Naive thymus-derived CD4-positive, alpha-beta T cell (primary cell): ENCODE measurements at regions of chr18 and their contacts with region 1.

Region 1: GRCh38 chr18:75478996-75479880 is 51.7 kb upstream of the SMIM21 start:
- DNase-seq: peak in 6 of 9 donors; percentile 15 to 56 (median 49)
- ATAC-seq: peak; percentile 69
- H3K4me3 ChIP-seq: no peak overlapping the region
- H3K4me3 Mint-ChIP-seq: no peak overlapping the region
- H3K27ac ChIP-seq: no peak overlapping the region
- H3K27ac Mint-ChIP-seq: no peak overlapping the region
- H3K4me1 ChIP-seq: no peaks in the 10 kb centered on the region
- H3K4me1 Mint-ChIP-seq: peaks cover 0 to 10% (median 6%) of the 10 kb centered on the region in 7 donors
- H3K27me3 ChIP-seq: peaks cover 0 to 3% of the 10 kb centered on the region in 2 donors
- H3K27me3 Mint-ChIP-seq: peaks cover 9 to 19% (median 13%) of the 10 kb centered on the region in 5 donors

Region 2: DNA sequence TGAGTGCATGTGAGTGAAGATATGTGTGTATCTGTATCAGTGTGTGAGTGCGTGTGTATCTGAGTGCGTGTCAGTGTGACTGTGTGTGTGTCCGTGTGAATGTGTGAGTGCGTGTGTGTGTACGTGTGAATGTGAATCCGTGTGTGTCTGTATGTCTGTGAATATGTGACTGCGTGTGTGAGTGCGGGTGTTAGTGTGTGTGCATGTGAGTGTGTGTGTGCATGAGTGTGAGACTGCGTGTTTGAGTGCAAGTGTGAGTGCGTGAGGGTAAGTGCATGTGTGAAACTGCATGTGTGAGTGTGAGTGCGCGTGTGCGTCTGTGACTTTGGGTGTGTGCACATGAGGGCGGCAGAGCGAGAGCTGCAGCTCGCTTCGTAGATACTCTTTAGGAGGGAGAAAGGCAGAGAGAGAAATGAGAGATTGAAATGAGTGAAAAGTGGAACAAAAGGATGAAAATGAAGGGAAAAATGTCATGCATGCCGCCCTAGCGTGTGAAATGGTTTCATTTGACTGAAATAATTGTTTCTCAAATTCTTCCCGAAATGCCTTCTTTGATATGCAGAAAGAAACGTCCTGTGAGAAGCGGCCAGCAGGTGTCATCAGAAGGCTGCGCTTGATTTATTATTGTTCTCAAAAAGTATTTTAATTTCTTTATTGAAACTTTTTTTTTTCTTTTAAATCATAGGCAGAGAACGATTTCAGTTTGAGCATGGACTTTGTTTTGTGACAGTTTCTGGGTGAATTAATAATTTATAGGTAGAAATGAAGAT is 856.0 kb before region 1 on chr18:
- CTCF ChIA-PET with region 1: interaction called, 3 read pairs
- POLR2A ChIA-PET with region 1: no interaction called
- intact Hi-C with region 1: loop called (anchors 1 to 2 kb)
- DNase-seq: peak in 7 of 9 donors; percentile 16 to 62 (median 48)
- ATAC-seq: peak; percentile 52
- H3K4me3 ChIP-seq: no peak overlapping the region
- H3K4me3 Mint-ChIP-seq: no peak overlapping the region
- H3K27ac ChIP-seq: no peak overlapping the region
- H3K27ac Mint-ChIP-seq: no peak overlapping the region
- H3K4me1 ChIP-seq: peaks cover 3 to 9% of the 10 kb centered on the region in 2 donors
- H3K4me1 Mint-ChIP-seq: peaks cover 6 to 28% (median 13%) of the 10 kb centered on the region in 7 donors
- H3K27me3 ChIP-seq: no peaks in the 10 kb centered on the region
- H3K27me3 Mint-ChIP-seq: no peaks in the 10 kb centered on the region

Region 3: GRCh38 chr18:75161256-75162028 is 317.8 kb before region 1 on chr18:
- CTCF ChIA-PET with region 1: no interaction called
- POLR2A ChIA-PET with region 1: no interaction called
- intact Hi-C with region 1: loop called in 1 of 2 experiments (anchors 1 kb)
- DNase-seq: peak in 7 of 9 donors; percentile 26 to 51 (median 37)
- ATAC-seq: peak; percentile 77
- H3K4me3 ChIP-seq: peak overlapping the region; percentile 77
- H3K4me3 Mint-ChIP-seq: peak overlapping the region; percentile 80 to 95 (median 91)
- H3K27ac ChIP-seq: peak overlapping the region; percentile 69
- H3K27ac Mint-ChIP-seq: peak overlapping the region in 8 of 9 donors; percentile 79 to 93 (median 88)
- H3K4me1 ChIP-seq: no peaks in the 10 kb centered on the region
- H3K4me1 Mint-ChIP-seq: peaks cover 7 to 28% (median 12%) of the 10 kb centered on the region in 7 donors
- H3K27me3 ChIP-seq: no peaks in the 10 kb centered on the region
- H3K27me3 Mint-ChIP-seq: peaks cover 0 to 4% (median 0%) of the 10 kb centered on the region in 5 donors

Region 4: GRCh38 chr18:75173125-75173432 is 306.2 kb before region 1 on chr18:
- CTCF ChIA-PET with region 1: no interaction called
- POLR2A ChIA-PET with region 1: no interaction called
- intact Hi-C with region 1: loop called in 1 of 2 experiments (anchors 10 kb)
- DNase-seq: peak in 3 of 9 donors; percentile 11 to 23 (median 16)
- ATAC-seq: peak; percentile 72
- H3K4me3 ChIP-seq: no peak overlapping the region
- H3K4me3 Mint-ChIP-seq: no peak overlapping the region
- H3K27ac ChIP-seq: no peak overlapping the region
- H3K27ac Mint-ChIP-seq: peak overlapping the region in 2 of 9 donors; percentile 12 to 43
- H3K4me1 ChIP-seq: no peaks in the 10 kb centered on the region
- H3K4me1 Mint-ChIP-seq: peaks cover 0 to 16% (median 10%) of the 10 kb centered on the region in 7 donors
- H3K27me3 ChIP-seq: no peaks in the 10 kb centered on the region
- H3K27me3 Mint-ChIP-seq: peaks cover 0 to 4% (median 0%) of the 10 kb centered on the region in 5 donors

Region 5: GRCh38 chr18:75247611-75248421 is 231.4 kb before region 1 on chr18:
- CTCF ChIA-PET with region 1: interaction called, 5 read pairs
- POLR2A ChIA-PET with region 1: interaction called, 3 read pairs
- intact Hi-C with region 1: loop called in 1 of 2 experiments (anchors 1 kb)
- DNase-seq: peak in 7 of 9 donors; percentile 43 to 66 (median 58)
- ATAC-seq: peak; percentile 62
- H3K4me3 ChIP-seq: peak overlapping the region; percentile 43
- H3K4me3 Mint-ChIP-seq: peak overlapping the region; percentile 86 to 93 (median 90)
- H3K27ac ChIP-seq: peak overlapping the region; percentile 82
- H3K27ac Mint-ChIP-seq: peak overlapping the region; percentile 91 to 99 (median 96)
- H3K4me1 ChIP-seq: peaks cover 31 to 43% of the 10 kb centered on the region in 2 donors
- H3K4me1 Mint-ChIP-seq: peaks cover 44 to 94% (median 87%) of the 10 kb centered on the region in 7 donors
- H3K27me3 ChIP-seq: no peaks in the 10 kb centered on the region
- H3K27me3 Mint-ChIP-seq: no peaks in the 10 kb centered on the region

Region 6: GRCh38 chr18:76349067-76349715 is 870.0 kb after region 1 on chr18:
- CTCF ChIA-PET with region 1: no interaction called
- POLR2A ChIA-PET with region 1: no interaction called
- intact Hi-C with region 1: loop called in 1 of 2 experiments (anchors 2 kb)
- DNase-seq: peak in 8 of 9 donors; percentile 42 to 70 (median 60)
- ATAC-seq: peak; percentile 68
- H3K4me3 ChIP-seq: no peak overlapping the region
- H3K4me3 Mint-ChIP-seq: peak overlapping the region in 5 of 10 donors; percentile 4 to 49 (median 12)
- H3K27ac ChIP-seq: no peak overlapping the region
- H3K27ac Mint-ChIP-seq: peak overlapping the region in 2 of 9 donors; percentile 5 to 39
- H3K4me1 ChIP-seq: peaks cover 0 to 3% of the 10 kb centered on the region in 2 donors
- H3K4me1 Mint-ChIP-seq: peaks cover 4 to 9% (median 7%) of the 10 kb centered on the region in 7 donors
- H3K27me3 ChIP-seq: no peaks in the 10 kb centered on the region
- H3K27me3 Mint-ChIP-seq: peaks cover 0 to 9% (median 0%) of the 10 kb centered on the region in 5 donors